ENCODE measurements at regions of chr4 and their contacts with region 1.

Region 1: GRCh38 chr4:4488405-4489404 is 53.1 kb downstream of the STX18 start:
- DNase-seq: peak; percentile 84
- H3K4me3 Mint-ChIP-seq: no peak overlapping the region
- H3K27ac Mint-ChIP-seq: no peak overlapping the region
- H3K4me1 Mint-ChIP-seq: peaks cover 11% of the 10 kb centered on the region
- H3K27me3 Mint-ChIP-seq: no peaks in the 10 kb centered on the region

Region 2: GRCh38 chr4:4502694-4503311 is 14.1 kb after region 1 on chr4:
- CTCF ChIA-PET with region 1: interaction called, 4 read pairs
- POLR2A ChIA-PET with region 1: interaction called, 4 read pairs
- intact Hi-C with region 1: loop called (anchors 1 kb)
- DNase-seq: peak; percentile 54
- H3K4me3 Mint-ChIP-seq: peak overlapping the region; percentile 62
- H3K27ac Mint-ChIP-seq: peak overlapping the region; percentile 35
- H3K4me1 Mint-ChIP-seq: peaks cover 15% of the 10 kb centered on the region
- H3K27me3 Mint-ChIP-seq: no peaks in the 10 kb centered on the region

Region 3: DNA sequence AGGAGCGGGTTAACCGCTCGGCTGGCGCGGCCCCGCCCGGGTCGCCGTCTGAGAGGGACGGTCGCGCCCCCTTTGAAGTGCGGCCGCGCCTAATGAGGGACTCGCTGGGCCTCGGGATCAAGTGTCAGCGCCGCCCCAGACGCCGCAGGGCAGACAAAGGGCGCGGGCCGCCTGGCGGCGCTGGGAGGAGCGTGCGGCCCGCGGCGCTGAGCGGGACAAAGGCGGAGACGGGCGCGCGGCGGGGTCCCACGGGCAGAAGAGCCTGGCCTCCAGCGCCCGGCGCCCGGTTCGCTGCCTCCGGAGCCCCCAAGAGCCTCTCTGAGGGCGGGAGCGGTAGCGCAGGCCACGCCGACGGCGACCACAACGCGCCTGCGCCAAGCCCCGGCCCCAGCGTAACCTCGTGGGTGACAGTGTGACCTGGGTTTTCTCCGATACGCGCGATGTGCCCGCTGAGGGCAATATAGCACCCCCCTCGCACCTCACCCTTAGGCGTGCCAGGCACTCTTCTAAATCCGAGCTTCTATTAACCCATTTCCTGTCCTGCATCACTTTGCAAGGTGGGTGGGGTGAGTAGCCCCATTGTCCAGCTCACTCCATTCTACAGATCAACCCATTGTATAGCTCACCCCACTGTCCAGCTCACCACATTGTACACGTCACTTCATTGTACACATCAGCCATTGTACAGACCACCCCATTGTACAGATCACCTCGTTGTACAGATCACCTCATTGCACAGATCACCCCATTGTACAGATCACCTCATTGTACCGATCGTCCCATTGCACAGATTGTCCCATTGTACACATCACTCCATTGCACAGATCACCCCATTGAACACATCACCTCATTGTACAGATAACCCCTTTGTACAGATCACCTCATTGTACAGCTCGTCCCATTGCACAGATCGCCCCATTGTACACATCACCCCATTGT is 86.8 kb after region 1 on chr4:
- CTCF ChIA-PET with region 1: interaction called, 13 read pairs
- POLR2A ChIA-PET with region 1: no interaction called
- intact Hi-C with region 1: loop called (anchors 1 kb)
- DNase-seq: peak; percentile 65
- H3K4me3 Mint-ChIP-seq: peak overlapping the region; percentile 65
- H3K27ac Mint-ChIP-seq: no peak overlapping the region
- H3K4me1 Mint-ChIP-seq: peaks cover 13% of the 10 kb centered on the region
- H3K27me3 Mint-ChIP-seq: no peaks in the 10 kb centered on the region

Region 4: GRCh38 chr4:4762909-4763821 is 274.5 kb after region 1 on chr4:
- CTCF ChIA-PET with region 1: no interaction called
- POLR2A ChIA-PET with region 1: no interaction called
- intact Hi-C with region 1: loop called (anchors 1 kb)
- DNase-seq: peak; percentile 79
- H3K4me3 Mint-ChIP-seq: peak overlapping the region; percentile 51
- H3K27ac Mint-ChIP-seq: peak overlapping the region; percentile 61
- H3K4me1 Mint-ChIP-seq: peaks cover 25% of the 10 kb centered on the region
- H3K27me3 Mint-ChIP-seq: peaks cover 7% of the 10 kb centered on the region

Region 5: DNA sequence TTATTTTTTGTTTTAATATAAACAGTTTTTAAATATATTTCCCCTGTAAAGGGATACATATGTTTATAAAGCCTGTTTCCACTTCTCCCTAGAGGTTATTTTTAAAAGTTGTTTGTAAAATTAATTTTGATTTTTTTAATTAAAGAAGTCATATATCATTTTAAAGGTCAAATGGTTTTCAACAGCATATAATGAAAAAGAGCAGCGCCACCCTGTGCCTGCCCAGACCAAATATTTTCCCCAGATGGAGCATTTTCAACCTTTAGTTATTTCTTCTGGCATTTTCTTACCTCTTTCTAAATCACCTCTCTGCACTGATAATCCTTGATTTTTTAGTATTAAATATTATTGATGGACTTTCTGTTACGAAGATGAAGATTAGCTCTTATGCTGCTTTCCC is 391.8 kb after region 1 on chr4:
- CTCF ChIA-PET with region 1: interaction called, 6 read pairs
- POLR2A ChIA-PET with region 1: no interaction called
- intact Hi-C with region 1: loop called (anchors 1 kb)
- DNase-seq: no peak
- H3K4me3 Mint-ChIP-seq: no peak overlapping the region
- H3K27ac Mint-ChIP-seq: no peak overlapping the region
- H3K4me1 Mint-ChIP-seq: no peaks in the 10 kb centered on the region
- H3K27me3 Mint-ChIP-seq: peaks cover 17% of the 10 kb centered on the region